PC-3 (cell line): ENCODE measurements at regions of chr3 and their contacts with region 1.

Region 1: DNA sequence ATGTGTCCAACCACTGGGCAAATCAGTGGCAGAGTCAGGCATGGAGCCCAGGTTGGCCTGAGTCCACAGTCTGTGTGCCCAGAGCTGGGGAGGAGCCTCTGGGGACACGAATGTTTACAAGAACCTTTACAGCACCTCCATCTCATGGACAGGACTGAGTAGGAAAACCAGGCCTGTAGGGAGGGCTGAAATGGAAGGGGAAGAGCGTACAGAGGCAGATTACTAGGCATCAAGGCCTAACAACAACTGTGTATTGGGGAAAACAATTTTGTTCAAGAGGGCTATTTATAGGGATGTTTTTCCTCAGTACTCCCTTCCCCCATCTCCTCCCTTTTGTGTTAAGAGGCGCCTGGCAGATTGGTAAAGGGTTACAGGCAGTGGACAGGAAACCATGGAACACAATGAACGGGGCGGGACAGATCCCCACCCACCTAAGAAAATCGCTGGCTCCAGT is 15.1 kb upstream of the ARHGAP31 start:
- DNase-seq: no peak
- ATAC-seq: peak; percentile 52; the same call in 1 of the 2 replicates
- H3K4me3 ChIP-seq: no peak overlapping the region
- H3K27ac ChIP-seq: no peak overlapping the region
- H3K4me1 ChIP-seq: no peaks in the 10 kb centered on the region
- H3K27me3 ChIP-seq: no peaks in the 10 kb centered on the region
- CTCF ChIP-seq: no peak

Region 2: DNA sequence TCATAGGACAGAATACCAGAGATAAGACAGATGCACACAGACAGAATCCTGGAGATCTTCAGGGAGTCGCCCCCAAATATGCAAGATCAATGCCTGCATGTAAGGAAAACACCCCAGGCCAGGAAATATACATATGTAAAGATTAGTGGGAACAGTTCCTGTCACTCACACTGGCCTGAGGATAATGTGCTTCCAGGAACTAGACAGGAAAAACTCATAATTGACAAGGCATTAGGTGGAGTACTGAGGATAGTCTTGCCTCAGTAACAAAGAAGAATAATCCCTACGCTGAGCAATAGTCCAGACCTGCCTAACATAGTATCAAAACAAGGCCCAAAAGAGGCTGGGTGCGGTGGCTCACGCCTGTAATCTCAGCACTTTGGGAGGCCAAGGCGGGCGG is 18.1 kb before region 1 on chr3:
- CTCF ChIA-PET with region 1: interaction called, 16 read pairs
- POLR2A ChIA-PET with region 1: no interaction called
- intact Hi-C with region 1: no loop called
- DNase-seq: no peak
- ATAC-seq: no peak
- H3K4me3 ChIP-seq: no peak overlapping the region
- H3K27ac ChIP-seq: no peak overlapping the region
- H3K4me1 ChIP-seq: peaks cover 14% of the 10 kb centered on the region; the same call in 1 of the 2 replicates
- H3K27me3 ChIP-seq: no peaks in the 10 kb centered on the region
- CTCF ChIP-seq: no peak

Region 3: GRCh38 chr3:119322835-119323722 is 44.0 kb after region 1 on chr3:
- CTCF ChIA-PET with region 1: interaction called, 3 read pairs
- POLR2A ChIA-PET with region 1: no interaction called
- intact Hi-C with region 1: loop called (anchors 2 kb)
- DNase-seq: peak; percentile 94
- ATAC-seq: peak; percentile 85
- H3K4me3 ChIP-seq: peak overlapping the region; percentile 74
- H3K27ac ChIP-seq: peak overlapping the region; percentile 82
- H3K4me1 ChIP-seq: peaks cover 19% of the 10 kb centered on the region
- H3K27me3 ChIP-seq: no peaks in the 10 kb centered on the region
- CTCF ChIP-seq: peak; percentile 17; the same call in 1 of the 2 replicates

Region 4: DNA sequence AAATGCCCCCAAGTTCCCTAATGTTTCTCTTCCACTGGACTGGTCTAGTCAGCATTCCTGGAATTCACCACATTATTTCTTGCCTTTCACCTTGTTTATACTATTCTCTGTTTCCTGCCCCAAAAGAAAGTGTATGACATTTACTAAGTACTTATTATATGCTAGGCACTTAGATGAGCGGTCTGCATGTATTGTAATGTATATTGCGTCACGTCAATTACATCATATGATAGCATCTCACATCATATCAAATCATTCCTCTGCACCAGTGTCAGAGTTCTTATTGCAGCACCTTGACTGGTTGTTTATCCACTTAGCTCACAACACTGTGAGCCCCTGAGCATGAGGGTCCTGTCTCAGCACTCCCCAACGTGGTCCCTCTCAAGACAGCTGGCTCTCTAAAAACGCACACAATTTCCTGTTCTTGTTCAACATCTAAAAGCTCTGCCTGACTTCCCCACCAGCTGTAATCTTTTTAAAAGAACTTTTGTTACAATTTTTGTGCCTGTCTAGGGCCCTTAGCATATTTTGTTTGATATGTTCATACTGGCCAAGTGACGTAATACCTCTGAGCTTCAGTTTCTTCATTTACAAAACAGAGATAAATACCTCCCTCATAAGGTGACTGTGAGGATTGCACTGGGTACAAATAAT is 73.8 kb after region 1 on chr3:
- CTCF ChIA-PET with region 1: interaction called, 5 read pairs
- POLR2A ChIA-PET with region 1: no interaction called
- intact Hi-C with region 1: loop called (anchors 1 kb)
- DNase-seq: peak; percentile 62
- ATAC-seq: peak; percentile 79
- H3K4me3 ChIP-seq: no peak overlapping the region
- H3K27ac ChIP-seq: no peak overlapping the region
- H3K4me1 ChIP-seq: no peaks in the 10 kb centered on the region
- H3K27me3 ChIP-seq: no peaks in the 10 kb centered on the region
- CTCF ChIP-seq: peak; percentile 65

Region 5: DNA sequence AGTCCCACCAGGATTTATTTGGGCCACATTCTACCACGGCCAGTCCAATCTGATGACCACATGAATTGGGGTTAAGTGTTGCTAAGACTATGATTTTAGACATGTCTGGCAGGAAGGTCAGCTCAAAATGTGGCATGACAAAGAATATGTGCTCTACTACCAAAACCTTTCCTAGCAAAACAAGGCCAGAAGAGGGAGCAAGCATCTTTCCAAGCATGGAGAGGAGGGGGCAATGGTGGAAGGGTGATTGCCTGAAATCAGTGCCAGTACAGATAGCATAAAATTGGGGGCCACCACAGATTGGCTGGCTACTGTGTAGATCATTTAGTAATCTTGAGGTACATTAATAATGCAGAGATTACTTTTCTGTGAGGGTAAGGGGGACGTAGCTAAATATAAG is 141.1 kb after region 1 on chr3:
- CTCF ChIA-PET with region 1: no interaction called
- POLR2A ChIA-PET with region 1: no interaction called
- intact Hi-C with region 1: loop called (anchors 10 kb)
- DNase-seq: peak; percentile 41
- ATAC-seq: peak; percentile 44; the same call in 1 of the 2 replicates
- H3K4me3 ChIP-seq: no peak overlapping the region
- H3K27ac ChIP-seq: no peak overlapping the region
- H3K4me1 ChIP-seq: no peaks in the 10 kb centered on the region
- H3K27me3 ChIP-seq: no peaks in the 10 kb centered on the region
- CTCF ChIP-seq: peak; percentile 57